ENCODE measurements at regions of chr6 and their contacts with region 1.

Region 1: DNA sequence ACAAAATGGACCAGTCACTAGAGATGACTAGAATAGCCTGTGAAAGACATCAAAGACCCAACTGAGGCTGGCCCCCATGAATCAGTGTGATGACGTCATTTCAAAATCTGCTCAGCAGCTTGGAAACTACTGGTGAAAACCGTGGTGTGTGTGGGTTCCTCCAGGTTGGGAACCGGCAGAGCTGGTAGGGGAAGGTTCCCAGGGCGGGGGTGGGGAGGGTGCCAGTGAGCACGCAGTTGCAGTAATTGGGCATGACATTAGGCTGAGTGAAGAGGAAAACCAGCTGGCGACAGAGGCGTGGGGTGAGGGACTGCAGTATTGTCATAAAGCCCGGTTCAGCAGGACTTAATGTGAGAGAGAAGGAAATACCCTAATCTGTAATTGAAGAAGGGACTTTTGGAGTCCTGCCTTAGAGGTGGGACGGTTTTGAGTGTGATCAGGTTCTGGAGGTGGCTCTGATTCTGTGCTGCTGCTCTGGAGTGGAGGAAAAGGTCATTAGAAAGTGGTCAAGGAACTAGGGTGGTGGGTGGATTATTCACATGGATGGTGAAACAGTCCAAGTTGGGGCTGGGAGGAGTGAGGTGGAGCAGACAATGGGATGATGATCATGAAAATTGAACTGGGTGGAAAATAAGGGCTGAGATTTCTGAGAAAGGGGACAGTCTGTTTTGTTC is 52.0 kb upstream of the MTHFD1L start:
- DNase-seq: no peak
- H3K4me3 Mint-ChIP-seq: no peak overlapping the region
- H3K27ac Mint-ChIP-seq: peak overlapping the region; percentile 33
- H3K4me1 Mint-ChIP-seq: peaks cover 9% of the 10 kb centered on the region
- H3K27me3 Mint-ChIP-seq: peaks cover 6% of the 10 kb centered on the region

Region 2: GRCh38 chr6:149934249-149935156 is 879.0 kb before region 1 on chr6:
- intact Hi-C with region 1: loop called (anchors 10 kb)
- DNase-seq: peak; percentile 60
- H3K4me3 Mint-ChIP-seq: no peak overlapping the region
- H3K27ac Mint-ChIP-seq: no peak overlapping the region
- H3K4me1 Mint-ChIP-seq: peaks cover 30% of the 10 kb centered on the region
- H3K27me3 Mint-ChIP-seq: peaks cover 85% of the 10 kb centered on the region

Region 3: GRCh38 chr6:150079604-150080003 is 733.9 kb before region 1 on chr6:
- intact Hi-C with region 1: loop called (anchors 1 kb)
- DNase-seq: peak; percentile 12
- H3K4me3 Mint-ChIP-seq: peak overlapping the region; percentile 54
- H3K27ac Mint-ChIP-seq: no peak overlapping the region
- H3K4me1 Mint-ChIP-seq: peaks cover 22% of the 10 kb centered on the region
- H3K27me3 Mint-ChIP-seq: peaks cover 33% of the 10 kb centered on the region

Region 4: DNA sequence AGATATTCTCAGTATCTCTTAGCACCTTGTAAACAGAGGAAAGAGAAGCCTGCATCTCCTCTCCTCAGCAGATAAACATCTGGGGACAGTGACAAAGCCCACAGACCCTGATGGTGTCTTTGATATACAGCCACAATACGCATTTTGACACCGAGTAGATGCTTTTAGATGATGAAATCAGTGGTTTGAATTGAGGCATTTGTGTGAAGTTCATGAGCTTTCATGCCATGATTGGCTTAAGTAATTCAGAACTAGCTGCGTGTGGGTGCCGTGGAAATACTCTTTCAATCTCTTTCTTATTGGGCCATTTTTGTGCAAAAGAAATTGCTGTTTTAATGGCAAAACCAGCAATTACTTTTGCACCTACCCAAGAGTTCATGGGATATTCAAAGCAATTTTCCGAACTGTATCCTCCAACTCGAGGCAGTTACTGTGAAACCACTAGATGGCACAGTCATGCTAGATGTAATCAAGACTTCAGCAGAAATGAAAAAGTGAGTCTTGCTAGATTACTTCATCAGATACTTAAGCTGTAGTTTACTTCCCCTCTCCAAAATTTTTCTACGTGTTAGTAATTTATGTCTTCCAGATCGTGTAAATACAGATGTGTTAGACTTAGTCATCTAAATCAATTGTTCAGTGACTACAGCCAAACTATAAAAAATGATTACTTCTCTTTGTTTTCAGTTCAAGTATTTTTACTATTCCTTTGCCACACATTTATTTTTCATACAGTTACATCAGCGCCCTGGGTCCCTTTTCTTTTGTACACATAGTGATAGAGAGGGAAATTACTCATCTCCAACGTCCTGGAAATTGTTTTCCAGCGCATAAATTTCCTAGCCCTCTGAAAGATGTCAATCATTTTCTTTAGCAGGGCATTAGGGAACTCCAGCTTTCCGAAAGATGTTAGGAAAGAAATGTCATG is 395.3 kb before region 1 on chr6:
- intact Hi-C with region 1: loop called (anchors 1 kb)
- DNase-seq: peak; percentile 6
- H3K4me3 Mint-ChIP-seq: peak overlapping the region; percentile 73
- H3K27ac Mint-ChIP-seq: peak overlapping the region; percentile 45
- H3K4me1 Mint-ChIP-seq: peaks cover 23% of the 10 kb centered on the region
- H3K27me3 Mint-ChIP-seq: peaks cover 36% of the 10 kb centered on the region

Region 5: GRCh38 chr6:150865406-150866146 is 52.1 kb after region 1 on chr6 and contains the start of gene MTHFD1L:
- intact Hi-C with region 1: loop called (anchors 2 kb)
- DNase-seq: peak; percentile 74
- H3K4me3 Mint-ChIP-seq: peak within 1 kb of the TSS; percentile 86
- H3K27ac Mint-ChIP-seq: peak within 1 kb of the TSS; percentile 91
- H3K4me1 Mint-ChIP-seq: peaks cover 38% of the 10 kb centered on the region
- H3K27me3 Mint-ChIP-seq: peaks cover 2% of the 10 kb centered on the region
- total RNA-seq, gene MTHFD1L: 121 and 125 TPM in 2 replicates

Region 6: GRCh38 chr6:150981095-150981494 is 167.6 kb after region 1 on chr6:
- intact Hi-C with region 1: no loop called
- DNase-seq: no peak
- H3K4me3 Mint-ChIP-seq: no peak overlapping the region
- H3K27ac Mint-ChIP-seq: no peak overlapping the region
- H3K4me1 Mint-ChIP-seq: peaks cover 10% of the 10 kb centered on the region
- H3K27me3 Mint-ChIP-seq: no peaks in the 10 kb centered on the region

Region 7: GRCh38 chr6:151335930-151336329 is 522.5 kb after region 1 on chr6:
- intact Hi-C with region 1: loop called (anchors 1 kb)
- DNase-seq: no peak
- H3K4me3 Mint-ChIP-seq: no peak overlapping the region
- H3K27ac Mint-ChIP-seq: no peak overlapping the region
- H3K4me1 Mint-ChIP-seq: no peaks in the 10 kb centered on the region
- H3K27me3 Mint-ChIP-seq: peaks cover 8% of the 10 kb centered on the region

Measured in activated T-helper 1 cell treated with anti-CD3 and anti-CD28 coated beads, Interleukin-12 subunit alpha, Interleukin-12 subunit beta, Interleukin-2, Interleukin-4 antibody, amounts not matched to agents 30 ng/mL and 10 ng/mL and 1 ng/mL, durations not matched to agents 14 hours and 24 hours and 36 hours (primary cell).